IMR-90 (cell line): ENCODE measurements at regions of chr14 and their contacts with region 1.

Region 1: DNA sequence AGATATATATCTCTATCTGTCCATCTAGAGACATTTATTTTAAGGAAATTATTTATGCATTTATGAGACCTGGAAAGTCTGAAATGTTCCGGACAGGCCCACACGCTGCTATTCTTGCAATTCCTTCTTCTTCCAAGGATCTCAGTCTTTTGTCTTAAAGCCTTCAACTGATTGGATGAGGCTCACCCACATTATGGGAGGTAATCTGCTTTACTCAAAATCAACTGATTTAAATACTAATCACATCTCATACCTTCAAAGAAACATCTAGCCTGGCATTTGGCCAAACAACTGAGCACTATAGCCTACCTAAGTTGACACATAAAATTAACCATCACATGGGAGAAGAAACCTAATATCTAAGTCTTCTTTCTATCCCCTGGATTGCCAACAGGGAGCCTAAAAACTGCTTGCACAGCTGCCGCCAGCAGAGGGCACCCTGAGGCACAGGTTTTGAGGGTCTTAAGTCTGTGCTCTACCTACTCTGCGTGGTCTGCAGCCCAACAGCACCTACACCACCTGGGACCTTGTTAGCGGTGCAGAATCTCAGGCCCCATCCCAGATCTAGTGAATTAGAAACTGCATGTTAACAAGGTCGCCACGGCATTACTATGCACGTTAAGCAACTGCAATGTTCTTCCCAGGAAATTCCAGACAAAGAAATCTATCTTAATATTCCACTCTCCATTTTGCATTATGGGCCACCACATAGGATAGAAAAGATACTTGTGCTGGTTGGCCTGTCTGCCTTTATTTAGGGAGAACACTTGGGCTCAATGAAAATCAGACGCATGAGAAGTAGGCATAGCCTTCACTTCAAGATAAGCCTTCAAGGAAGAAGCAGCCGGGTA is 249.7 kb downstream of the FOXG1 start:
- DNase-seq: peak; percentile 51
- ATAC-seq: peak; percentile 67
- H3K4me3 ChIP-seq: no peak overlapping the region
- H3K27ac ChIP-seq: no peak overlapping the region
- H3K4me1 ChIP-seq: no peaks in the 10 kb centered on the region
- H3K27me3 ChIP-seq: no peaks in the 10 kb centered on the region; the same call in 1 of the 2 replicates
- CTCF ChIP-seq: peak; percentile 74
- POLR2A ChIP-seq: no peak
- RAD21 ChIP-seq: peak; percentile 74

Region 2: DNA sequence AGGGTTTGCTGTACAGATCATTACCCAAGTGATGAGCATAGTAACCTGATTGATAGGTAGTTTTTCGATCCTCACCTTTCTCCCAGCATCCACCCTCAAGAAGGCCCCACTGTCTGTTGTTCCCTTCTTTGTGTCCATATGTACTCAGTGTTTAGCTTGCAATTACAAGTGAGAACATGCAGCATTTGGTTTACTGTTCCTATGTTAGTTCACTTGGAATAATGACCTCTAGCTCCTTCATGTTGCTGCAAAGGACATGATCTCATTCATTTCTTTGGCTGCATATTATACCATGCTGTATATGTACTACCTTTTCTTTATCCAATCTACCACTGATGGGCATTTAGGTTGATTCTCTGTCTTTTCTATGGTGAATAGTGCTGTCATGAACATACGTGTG is 431.3 kb before region 1 on chr14:
- CTCF ChIA-PET with region 1: no interaction called
- POLR2A ChIA-PET with region 1: no interaction called
- dilution Hi-C with region 1: no loop called
- in situ Hi-C with region 1: no loop called
- intact Hi-C with region 1: no loop called
- DNase-seq: no peak
- ATAC-seq: no peak
- H3K4me3 ChIP-seq: no peak overlapping the region
- H3K27ac ChIP-seq: no peak overlapping the region
- H3K4me1 ChIP-seq: no peaks in the 10 kb centered on the region
- H3K27me3 ChIP-seq: no peaks in the 10 kb centered on the region
- CTCF ChIP-seq: no peak
- POLR2A ChIP-seq: no peak
- RAD21 ChIP-seq: no peak

Region 3: DNA sequence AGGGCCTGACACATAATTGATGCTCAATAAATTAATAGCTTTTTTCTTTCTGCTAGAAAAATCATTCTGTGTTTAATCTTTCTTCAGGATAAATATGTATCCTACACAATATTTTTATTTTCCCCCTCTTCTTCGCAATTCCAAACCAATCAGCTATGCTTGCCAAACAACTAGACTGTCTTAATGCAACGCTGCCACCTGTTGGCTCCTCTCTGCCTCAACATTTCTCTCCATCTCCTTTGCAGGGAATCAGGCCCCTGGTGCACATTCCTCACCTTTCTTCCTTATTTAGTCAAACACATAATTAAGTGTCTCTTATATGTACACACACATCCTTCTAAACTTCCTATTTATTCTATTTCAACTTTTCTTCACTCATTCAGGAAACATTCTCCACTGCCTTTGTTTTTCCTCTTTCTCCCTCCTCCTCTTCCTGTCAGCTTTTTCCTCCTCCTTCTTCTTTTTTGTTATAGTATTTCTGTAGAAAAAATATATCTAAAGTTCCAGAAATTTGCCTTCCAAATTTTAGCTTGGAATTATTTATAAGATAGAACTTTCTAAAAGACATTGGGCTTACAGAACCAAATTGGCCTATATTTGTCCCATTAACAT is 505.4 kb after region 1 on chr14:
- CTCF ChIA-PET with region 1: no interaction called
- POLR2A ChIA-PET with region 1: no interaction called
- dilution Hi-C with region 1: no loop called
- in situ Hi-C with region 1: loop called (anchors 10 kb)
- intact Hi-C with region 1: loop called (anchors 1 kb)
- DNase-seq: peak; percentile 6
- ATAC-seq: no peak
- H3K4me3 ChIP-seq: no peak overlapping the region
- H3K27ac ChIP-seq: no peak overlapping the region
- H3K4me1 ChIP-seq: no peaks in the 10 kb centered on the region
- H3K27me3 ChIP-seq: no peaks in the 10 kb centered on the region
- CTCF ChIP-seq: peak; percentile 32
- POLR2A ChIP-seq: no peak
- RAD21 ChIP-seq: peak; percentile 47

Region 4: DNA sequence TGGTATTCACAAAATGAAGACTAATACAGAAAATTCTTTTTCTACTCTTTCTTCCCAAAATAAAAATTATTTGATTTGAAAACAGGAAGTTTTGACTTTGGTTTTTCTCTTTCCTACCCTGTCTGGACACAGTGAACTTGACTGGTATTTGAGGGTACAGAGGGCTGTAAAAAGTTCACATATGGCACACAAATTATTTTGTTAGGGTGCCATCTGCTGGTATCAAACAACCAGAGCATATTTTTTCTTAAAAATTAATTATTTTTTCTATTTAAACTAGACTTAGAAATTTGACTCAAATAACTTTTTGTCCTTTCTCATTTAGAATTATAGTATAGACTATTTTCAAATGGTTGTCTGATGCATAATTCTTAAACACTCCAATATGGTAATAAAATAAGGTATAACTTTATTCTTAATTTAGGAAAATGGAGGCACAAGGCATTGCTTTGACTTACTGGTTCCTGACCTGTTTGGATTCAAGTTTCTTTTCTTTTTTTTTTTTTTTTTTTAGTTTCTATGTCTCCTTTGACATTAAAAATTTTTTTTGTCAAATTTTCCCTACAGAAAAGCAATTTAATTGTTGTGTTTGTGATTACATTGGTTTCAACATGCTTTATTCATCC is 520.7 kb after region 1 on chr14:
- CTCF ChIA-PET with region 1: no interaction called
- POLR2A ChIA-PET with region 1: no interaction called
- dilution Hi-C with region 1: no loop called
- in situ Hi-C with region 1: no loop called
- intact Hi-C with region 1: loop called (anchors 5 kb)
- DNase-seq: peak; percentile 35
- ATAC-seq: peak; percentile 60
- H3K4me3 ChIP-seq: no peak overlapping the region
- H3K27ac ChIP-seq: no peak overlapping the region
- H3K4me1 ChIP-seq: no peaks in the 10 kb centered on the region
- H3K27me3 ChIP-seq: peaks cover 8% of the 10 kb centered on the region
- CTCF ChIP-seq: peak; percentile 61
- POLR2A ChIP-seq: no peak
- RAD21 ChIP-seq: peak; percentile 53